CD14-positive monocyte (primary cell): ENCODE measurements at regions of chrX and their contacts with region 1.

Region 1: DNA sequence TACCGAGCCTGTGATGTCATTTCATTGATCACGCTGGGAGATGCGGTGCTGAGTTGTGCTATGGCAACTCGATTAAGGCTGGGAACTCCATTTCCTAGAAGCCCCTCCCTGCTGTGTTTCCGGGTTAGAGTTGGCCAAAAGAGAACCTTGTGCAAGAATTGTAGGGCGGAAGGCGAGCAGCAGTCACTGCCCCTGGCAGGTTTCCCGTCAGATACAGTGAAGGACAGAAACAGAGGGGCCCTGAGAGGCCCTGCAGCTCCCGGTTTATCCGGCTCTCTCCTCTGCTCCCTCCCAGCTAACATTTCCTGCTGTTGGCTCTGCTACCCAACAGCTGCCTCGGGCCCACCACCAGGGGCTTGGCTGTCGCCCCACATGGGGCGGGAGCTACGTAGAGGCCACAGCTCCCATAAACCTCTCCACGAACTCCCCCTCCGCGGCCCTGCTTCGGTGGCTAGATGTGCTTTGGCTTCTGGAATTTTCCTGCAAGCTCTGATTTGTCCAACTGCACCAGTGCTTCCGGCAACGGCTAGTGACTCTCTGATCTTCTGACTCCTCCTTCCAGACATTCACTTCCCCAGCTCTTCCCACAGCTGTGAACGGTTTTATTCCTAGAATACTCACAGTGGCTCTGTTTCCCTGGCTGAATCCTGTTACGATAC is 74.9 kb upstream of the USP9X start:
- DNase-seq: peak; percentile 76 to 83 (median 76)
- H3K4me3 ChIP-seq: peak overlapping the region; percentile 28 to 70 (median 58)
- H3K4me3 Mint-ChIP-seq: peak overlapping the region; percentile 74 to 89
- H3K27ac ChIP-seq: peak overlapping the region; percentile 89 to 94
- H3K27ac Mint-ChIP-seq: peak overlapping the region; percentile 94 to 97 (median 95)
- H3K4me1 ChIP-seq: peaks cover 20 to 22% of the 10 kb centered on the region in 2 donors
- H3K4me1 Mint-ChIP-seq: peaks cover 23% of the 10 kb centered on the region
- H3K27me3 ChIP-seq: no peaks in the 10 kb centered on the region
- H3K27me3 Mint-ChIP-seq: peaks cover 3 to 10% (median 4%) of the 10 kb centered on the region in 3 donors
- CTCF ChIP-seq: no peak

Region 2: DNA sequence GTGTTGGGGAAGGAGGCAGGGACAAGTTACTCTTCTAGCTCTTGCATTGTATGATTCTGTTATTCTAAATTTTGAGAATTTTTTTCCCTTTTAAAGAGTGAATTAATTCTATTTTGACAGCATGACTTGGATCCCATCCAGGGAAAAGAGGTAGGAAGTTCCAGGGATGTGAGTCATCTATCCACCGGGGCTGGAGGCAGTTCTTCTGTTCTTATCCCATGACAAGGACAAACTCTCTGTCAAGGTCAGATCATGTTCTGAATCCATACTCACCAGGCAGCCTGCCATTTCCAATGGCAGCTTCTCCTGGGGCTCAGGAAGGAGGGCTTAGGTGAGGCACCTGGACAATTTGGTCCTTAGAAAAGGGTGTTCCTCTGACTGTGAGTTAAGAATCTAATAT is 143.0 kb before region 1 on chrX:
- intact Hi-C with region 1: no loop called
- DNase-seq: peak in 1 of 3 donors; percentile 11
- H3K4me3 ChIP-seq: no peak overlapping the region
- H3K4me3 Mint-ChIP-seq: no peak overlapping the region
- H3K27ac ChIP-seq: no peak overlapping the region
- H3K27ac Mint-ChIP-seq: no peak overlapping the region
- H3K4me1 ChIP-seq: no peaks in the 10 kb centered on the region
- H3K4me1 Mint-ChIP-seq: no peaks in the 10 kb centered on the region
- H3K27me3 ChIP-seq: peaks cover 0 to 16% of the 10 kb centered on the region in 2 donors
- H3K27me3 Mint-ChIP-seq: peaks cover 3 to 10% (median 5%) of the 10 kb centered on the region in 3 donors
- CTCF ChIP-seq: no peak

Region 3: GRCh38 chrX:40945361-40945713 is 65.0 kb before region 1 on chrX:
- intact Hi-C with region 1: loop called in 1 of 2 experiments (anchors 10 kb)
- DNase-seq: peak; percentile 50 to 84 (median 77)
- H3K4me3 ChIP-seq: no peak overlapping the region
- H3K4me3 Mint-ChIP-seq: no peak overlapping the region
- H3K27ac ChIP-seq: peak overlapping the region in 1 of 2 donors; percentile 52
- H3K27ac Mint-ChIP-seq: peak overlapping the region; percentile 21 to 86 (median 71)
- H3K4me1 ChIP-seq: peaks cover 9 to 18% of the 10 kb centered on the region in 2 donors
- H3K4me1 Mint-ChIP-seq: peaks cover 14% of the 10 kb centered on the region
- H3K27me3 ChIP-seq: no peaks in the 10 kb centered on the region
- H3K27me3 Mint-ChIP-seq: peaks cover 0 to 7% (median 0%) of the 10 kb centered on the region in 3 donors
- CTCF ChIP-seq: no peak

Region 4: DNA sequence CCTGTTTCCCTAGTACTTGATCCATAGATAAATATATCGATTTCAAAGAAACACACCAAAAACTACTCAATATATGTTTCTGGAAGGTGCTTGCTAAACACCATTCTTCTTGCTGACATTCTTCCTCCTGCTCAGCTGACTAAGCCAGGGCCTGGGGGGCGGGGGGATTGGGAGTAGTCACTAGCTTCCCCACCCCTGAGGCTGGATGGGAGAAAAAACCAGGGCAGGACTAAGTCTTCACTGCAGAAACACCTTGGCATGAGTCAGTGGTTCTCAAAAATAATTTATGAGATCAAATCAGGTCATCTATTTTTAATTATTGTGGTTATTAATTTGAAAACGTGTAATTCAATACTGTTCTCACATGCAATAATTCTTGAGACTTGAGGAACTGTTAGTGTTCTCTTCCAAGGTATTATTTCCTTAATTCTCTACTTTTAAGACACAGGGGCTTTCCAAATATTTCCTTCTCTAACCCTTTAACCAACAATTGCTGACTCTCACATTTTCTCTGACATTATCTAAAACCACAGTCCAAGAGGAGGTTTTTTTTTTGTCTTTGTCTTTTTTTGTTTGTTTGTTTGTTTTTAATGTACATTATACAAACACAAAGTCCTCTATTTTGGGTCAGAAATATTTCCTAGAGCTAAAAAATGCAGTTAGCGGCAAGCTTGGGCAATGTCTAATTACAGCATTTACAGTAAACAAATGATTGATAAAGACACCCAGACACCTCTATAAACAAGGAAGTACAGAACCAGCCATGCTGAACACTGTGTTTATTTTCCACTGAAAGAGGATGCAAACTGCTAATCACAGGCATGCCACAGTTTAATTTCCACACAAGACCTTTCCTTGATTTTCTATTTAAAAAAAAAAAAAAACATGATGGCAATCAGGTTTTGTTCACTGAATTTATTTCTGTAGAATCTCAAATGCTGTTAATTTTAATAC is 45.4 kb before region 1 on chrX:
- intact Hi-C with region 1: no loop called
- DNase-seq: no peak
- H3K4me3 ChIP-seq: no peak overlapping the region
- H3K4me3 Mint-ChIP-seq: no peak overlapping the region
- H3K27ac ChIP-seq: no peak overlapping the region
- H3K27ac Mint-ChIP-seq: peak overlapping the region in 1 of 7 donors; percentile 69
- H3K4me1 ChIP-seq: peaks cover 0 to 3% of the 10 kb centered on the region in 2 donors
- H3K4me1 Mint-ChIP-seq: peaks cover 15% of the 10 kb centered on the region
- H3K27me3 ChIP-seq: no peaks in the 10 kb centered on the region
- H3K27me3 Mint-ChIP-seq: peaks cover 0 to 3% (median 0%) of the 10 kb centered on the region in 3 donors
- CTCF ChIP-seq: no peak

Region 5: GRCh38 chrX:41084044-41084892 is 74.0 kb after region 1 on chrX:
- intact Hi-C with region 1: loop called in 1 of 2 experiments (anchors 10 kb)
- DNase-seq: peak; percentile 88 to 96 (median 96)
- H3K4me3 ChIP-seq: peak overlapping the region; percentile 66 to 87 (median 85)
- H3K4me3 Mint-ChIP-seq: peak overlapping the region; percentile 82 to 88
- H3K27ac ChIP-seq: peak overlapping the region; percentile 96 to 100
- H3K27ac Mint-ChIP-seq: peak overlapping the region; percentile 97 to 99 (median 98)
- H3K4me1 ChIP-seq: peaks cover 22 to 40% of the 10 kb centered on the region in 2 donors
- H3K4me1 Mint-ChIP-seq: peaks cover 32% of the 10 kb centered on the region
- H3K27me3 ChIP-seq: peaks cover 0 to 23% of the 10 kb centered on the region in 2 donors
- H3K27me3 Mint-ChIP-seq: peaks cover 0 to 61% (median 1%) of the 10 kb centered on the region in 3 donors
- CTCF ChIP-seq: no peak